ENCODE measurements at regions of chr10 and their contacts with region 1.

Region 1: GRCh38 chr10:128263891-128264688 is 137.9 kb upstream of the MKI67 start:
- DNase-seq: no peak
- ATAC-seq: peak; percentile 88
- H3K4me3 ChIP-seq: no peak overlapping the region
- H3K27ac ChIP-seq: no peak overlapping the region
- H3K4me1 ChIP-seq: no peaks in the 10 kb centered on the region
- H3K27me3 ChIP-seq: peaks cover 0 to 2% of the 10 kb centered on the region in 2 experiments; a peak in 1 of 4 replicates
- CTCF ChIP-seq: peak; percentile 56 to 66 (median 65)
- EP300 ChIP-seq: no peak
- POLR2A ChIP-seq: no peak
- RAD21 ChIP-seq: peak; percentile 52

Region 2: DNA sequence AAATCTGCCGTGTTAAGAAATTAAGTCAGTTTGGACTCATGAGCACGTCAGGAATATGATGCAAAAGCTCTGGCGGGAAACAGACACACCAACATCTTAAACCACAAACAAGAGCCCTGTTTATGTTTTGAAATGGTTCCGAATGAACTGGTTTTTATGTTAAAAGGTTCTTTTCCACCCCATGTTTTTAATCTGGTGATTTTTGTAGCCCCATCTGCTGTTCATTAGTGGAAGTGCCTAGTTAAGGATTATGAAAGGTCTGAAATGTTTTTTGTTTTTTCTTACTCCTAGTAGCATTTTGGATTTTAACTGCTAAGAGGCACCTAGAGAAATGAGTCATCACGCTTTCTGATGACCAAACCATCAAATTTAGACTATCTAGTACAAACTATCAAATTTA is 266.2 kb after region 1 on chr10:
- CTCF ChIA-PET with region 1: interaction called, 4 read pairs
- POLR2A ChIA-PET with region 1: no interaction called
- RAD21 ChIA-PET with region 1: no interaction called
- SMC1A ChIA-PET with region 1: no interaction called
- in situ Hi-C with region 1: no loop called
- intact Hi-C with region 1: loop called (anchors 5 kb)
- DNase-seq: no peak
- ATAC-seq: no peak
- H3K4me3 ChIP-seq: no peak overlapping the region
- H3K27ac ChIP-seq: no peak overlapping the region
- H3K4me1 ChIP-seq: no peaks in the 10 kb centered on the region
- H3K27me3 ChIP-seq: peaks cover 0 to 3% of the 10 kb centered on the region in 2 experiments; a peak in 2 of 4 replicates
- CTCF ChIP-seq: peak; percentile 24 to 45 (median 43); a peak in 4 of 6 replicates
- EP300 ChIP-seq: no peak
- POLR2A ChIP-seq: no peak
- RAD21 ChIP-seq: peak; percentile 27; the same call in 1 of the 2 replicates

Region 3: GRCh38 chr10:128859738-128860386 is 595.8 kb after region 1 on chr10:
- CTCF ChIA-PET with region 1: interaction called, 4 read pairs
- POLR2A ChIA-PET with region 1: no interaction called
- RAD21 ChIA-PET with region 1: no interaction called
- SMC1A ChIA-PET with region 1: no interaction called
- in situ Hi-C with region 1: no loop called
- intact Hi-C with region 1: loop called (anchors 10 kb)
- DNase-seq: no peak
- ATAC-seq: peak; percentile 52; the same call in 1 of the 3 replicates
- H3K4me3 ChIP-seq: no peak overlapping the region
- H3K27ac ChIP-seq: no peak overlapping the region
- H3K4me1 ChIP-seq: no peaks in the 10 kb centered on the region
- H3K27me3 ChIP-seq: peaks cover 0 to 3% of the 10 kb centered on the region in 2 experiments; a peak in 1 of 4 replicates
- CTCF ChIP-seq: peak; percentile 44 to 56 (median 51); a peak in 5 of 6 replicates
- EP300 ChIP-seq: no peak
- POLR2A ChIP-seq: no peak
- RAD21 ChIP-seq: peak; percentile 51